Endothelial cell of umbilical vein (primary cell): ENCODE measurements at regions of chr16 and their contacts with region 1.

Region 1: GRCh38 chr16:67159593-67160406 is at the starts of genes FBXL8 and TRADD:
- DNase-seq: peak; percentile 79
- H3K4me3 ChIP-seq: peak within 1 kb of the TSS; percentile 78 to 89 (median 81)
- H3K27ac ChIP-seq: peak within 1 kb of the TSS; percentile 38
- H3K4me1 ChIP-seq: peaks cover 18% of the 10 kb centered on the region
- H3K27me3 ChIP-seq: peaks cover 19 to 21% of the 10 kb centered on the region in 2 experiments
- CTCF ChIP-seq: peak; percentile 34 to 59
- POLR2A ChIP-seq: peak; percentile 70
- total RNA-seq, gene FBXL8: 5.4 and 7.0 TPM in 2 replicates
- total RNA-seq, gene TRADD: 15.2 and 17.4 TPM in 2 replicates

Region 2: DNA sequence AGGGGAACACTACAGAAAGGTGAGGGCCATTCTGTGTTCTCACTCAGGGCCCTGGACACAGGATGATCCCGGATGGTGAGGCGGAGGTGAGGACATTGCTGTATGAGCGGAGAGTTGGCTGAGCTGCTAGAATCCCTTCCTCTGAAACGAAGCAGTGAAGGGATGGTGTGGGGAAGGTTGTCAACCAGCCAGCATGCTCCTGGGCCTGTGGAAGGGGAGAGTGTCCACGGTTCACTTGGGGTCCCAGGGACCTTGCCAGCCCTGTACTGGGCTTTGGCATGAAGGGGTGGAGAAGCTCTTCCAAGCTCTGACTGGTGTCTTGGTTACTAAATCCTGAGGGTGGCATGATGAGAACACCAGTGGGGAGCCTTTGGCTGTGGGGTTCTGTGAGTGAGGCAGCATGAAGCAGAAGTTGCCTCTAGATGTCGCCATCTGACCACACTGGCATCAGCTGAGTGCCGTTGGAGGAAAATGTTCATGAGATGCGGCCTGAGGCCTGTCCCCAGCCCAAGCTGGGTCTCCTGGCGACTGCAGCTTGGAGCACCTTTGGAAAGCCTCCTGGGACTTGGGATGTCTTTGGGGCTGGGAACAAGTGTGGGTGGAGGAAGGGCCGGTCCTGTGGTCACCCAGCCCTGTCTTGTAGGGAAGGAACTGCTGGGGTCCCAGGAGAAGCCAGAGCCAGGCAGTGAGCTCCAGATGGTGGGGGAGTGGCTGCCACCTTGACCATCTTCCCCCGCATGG is 264.7 kb before region 1 on chr16:
- CTCF ChIA-PET with region 1: interaction called, 19 read pairs
- POLR2A ChIA-PET with region 1: no interaction called
- dilution Hi-C with region 1: no loop called
- intact Hi-C with region 1: no loop called
- DNase-seq: peak; percentile 64
- H3K4me3 ChIP-seq: no peak overlapping the region
- H3K27ac ChIP-seq: no peak overlapping the region
- H3K4me1 ChIP-seq: peaks cover 5% of the 10 kb centered on the region
- H3K27me3 ChIP-seq: no peaks in the 10 kb centered on the region
- CTCF ChIP-seq: peak; percentile 74 to 89
- POLR2A ChIP-seq: no peak

Region 3: DNA sequence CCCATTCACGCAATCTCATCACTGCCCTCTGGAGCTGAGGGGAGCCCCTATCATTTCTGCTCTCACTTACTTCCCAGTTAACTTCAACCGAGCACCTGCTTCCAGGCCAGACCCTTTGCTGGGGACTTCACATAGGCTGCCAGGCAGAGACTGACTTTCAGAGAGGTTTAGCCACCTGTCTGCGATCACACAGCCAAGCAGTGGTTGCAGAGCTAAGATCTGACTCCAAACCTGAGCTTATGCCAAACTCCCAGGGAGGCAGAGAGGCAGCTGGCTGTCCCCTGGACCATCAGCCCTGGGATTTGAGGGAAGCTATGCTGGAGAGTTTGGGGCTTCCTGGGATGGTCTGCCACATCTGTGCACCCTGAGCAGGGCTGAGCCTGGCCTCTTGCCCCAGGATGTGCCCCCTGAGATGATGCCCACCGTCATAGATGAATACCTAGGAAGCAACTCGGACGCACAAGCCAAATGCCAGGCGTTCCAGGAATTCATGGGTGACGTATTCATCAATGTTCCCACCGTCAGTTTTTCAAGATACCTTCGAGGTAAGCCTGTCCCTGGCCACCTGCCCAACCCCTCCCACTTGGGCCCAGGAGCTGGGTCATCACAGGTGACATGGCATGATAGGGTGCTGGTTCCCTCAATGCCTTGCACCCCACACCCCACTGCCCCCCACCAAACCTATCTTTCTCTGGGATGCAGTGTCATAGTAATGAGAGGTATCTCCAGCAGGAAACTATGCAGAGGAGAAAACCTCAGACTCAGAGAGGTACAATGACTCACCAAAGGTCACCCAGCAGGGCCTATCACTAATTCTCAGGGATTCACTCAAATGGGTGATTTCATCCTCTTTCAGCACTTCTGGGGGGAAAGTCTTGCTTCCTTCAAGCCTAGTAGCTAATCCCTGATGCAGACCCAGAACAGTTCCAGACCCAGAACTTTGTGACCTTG is 188.8 kb before region 1 on chr16:
- CTCF ChIA-PET with region 1: interaction called, 58 read pairs
- POLR2A ChIA-PET with region 1: no interaction called
- dilution Hi-C with region 1: no loop called
- intact Hi-C with region 1: no loop called
- DNase-seq: no peak
- H3K4me3 ChIP-seq: no peak overlapping the region
- H3K27ac ChIP-seq: no peak overlapping the region
- H3K4me1 ChIP-seq: no peaks in the 10 kb centered on the region
- H3K27me3 ChIP-seq: peaks cover 2 to 3% of the 10 kb centered on the region in 2 experiments
- CTCF ChIP-seq: no peak
- POLR2A ChIP-seq: no peak

Region 4: DNA sequence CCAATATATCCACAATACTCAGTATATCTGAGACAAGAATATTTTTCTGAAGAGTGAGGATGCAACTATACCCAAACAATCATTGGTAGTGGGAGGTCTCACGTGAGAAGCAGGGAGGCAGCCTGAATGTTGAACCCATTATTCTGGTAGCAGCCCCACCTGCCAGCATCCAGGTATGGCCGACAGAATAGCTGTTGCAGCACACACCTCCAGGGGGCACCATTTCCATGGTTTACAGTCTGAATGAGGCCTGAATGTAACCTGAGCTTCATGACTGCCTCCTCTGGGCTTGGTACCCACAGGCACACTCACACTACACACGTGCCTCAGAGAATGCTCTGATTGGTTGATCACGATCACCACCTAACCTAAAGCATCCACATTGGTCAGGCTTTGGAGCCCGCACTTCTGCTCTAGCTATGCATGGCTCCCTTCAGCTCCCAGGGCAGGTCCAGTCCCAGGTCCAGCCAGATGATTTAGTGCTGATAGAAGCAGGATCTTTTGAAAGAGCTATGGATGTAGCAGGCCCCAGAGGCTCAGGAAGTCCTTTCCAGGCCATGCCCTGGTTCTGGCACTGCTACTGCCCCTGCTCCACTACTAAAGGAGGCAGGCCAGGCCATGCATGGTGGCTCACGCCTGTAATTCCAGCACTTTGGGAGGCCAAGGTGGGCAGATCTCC is 141.9 kb before region 1 on chr16:
- CTCF ChIA-PET with region 1: interaction called, 302 read pairs
- POLR2A ChIA-PET with region 1: interaction called, 12 read pairs
- dilution Hi-C with region 1: no loop called
- intact Hi-C with region 1: loop called (anchors 1 kb)
- DNase-seq: peak; percentile 89
- H3K4me3 ChIP-seq: no peak overlapping the region
- H3K27ac ChIP-seq: no peak overlapping the region
- H3K4me1 ChIP-seq: peaks cover 9% of the 10 kb centered on the region
- H3K27me3 ChIP-seq: no peaks in the 10 kb centered on the region
- CTCF ChIP-seq: peak; percentile 76 to 81
- POLR2A ChIP-seq: no peak

Region 5: DNA sequence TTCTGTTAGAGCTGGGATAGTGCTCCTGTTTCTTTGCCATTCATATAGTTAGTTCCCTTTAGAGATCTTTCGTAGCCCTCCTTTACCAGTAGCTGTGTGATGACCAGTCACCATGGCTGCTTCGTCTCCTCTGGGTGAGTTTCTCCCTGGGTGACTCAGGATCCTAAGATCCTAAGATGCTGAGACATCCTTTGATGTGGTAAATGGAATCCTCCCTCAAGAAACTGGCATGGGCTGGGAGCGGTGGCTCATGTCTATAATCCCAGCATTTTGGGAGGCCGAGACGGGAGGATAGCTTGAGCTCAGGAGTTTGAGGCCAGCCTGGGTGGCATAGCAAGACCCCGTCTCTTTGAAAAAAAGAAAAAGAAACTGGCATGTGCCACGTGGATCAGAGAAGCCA is 44.2 kb before region 1 on chr16:
- CTCF ChIA-PET with region 1: interaction called, 20 read pairs
- POLR2A ChIA-PET with region 1: no interaction called
- dilution Hi-C with region 1: no loop called
- intact Hi-C with region 1: no loop called
- DNase-seq: no peak
- H3K4me3 ChIP-seq: no peak overlapping the region
- H3K27ac ChIP-seq: no peak overlapping the region
- H3K4me1 ChIP-seq: peaks cover 1% of the 10 kb centered on the region
- H3K27me3 ChIP-seq: no peaks in the 10 kb centered on the region
- CTCF ChIP-seq: no peak
- POLR2A ChIP-seq: no peak

Region 6: GRCh38 chr16:67144943-67145342 is 14.9 kb before region 1 on chr16:
- CTCF ChIA-PET with region 1: interaction called, 67 read pairs
- POLR2A ChIA-PET with region 1: no interaction called
- dilution Hi-C with region 1: no loop called
- intact Hi-C with region 1: no loop called
- DNase-seq: no peak
- H3K4me3 ChIP-seq: no peak overlapping the region
- H3K27ac ChIP-seq: no peak overlapping the region
- H3K4me1 ChIP-seq: no peaks in the 10 kb centered on the region
- H3K27me3 ChIP-seq: peaks cover 0 to 2% of the 10 kb centered on the region in 2 experiments
- CTCF ChIP-seq: no peak
- POLR2A ChIP-seq: no peak

Region 7: GRCh38 chr16:67279296-67280089 is 119.7 kb after region 1 on chr16 and contains the start of gene PLEKHG4:
- CTCF ChIA-PET with region 1: no interaction called
- POLR2A ChIA-PET with region 1: no interaction called
- dilution Hi-C with region 1: no loop called
- intact Hi-C with region 1: no loop called
- DNase-seq: peak; percentile 71
- H3K4me3 ChIP-seq: peak within 1 kb of the TSS; percentile 16 to 60 (median 51)
- H3K27ac ChIP-seq: peak within 1 kb of the TSS; percentile 78
- H3K4me1 ChIP-seq: peaks cover 21% of the 10 kb centered on the region
- H3K27me3 ChIP-seq: no peaks in the 10 kb centered on the region
- CTCF ChIP-seq: peak; percentile 73
- POLR2A ChIP-seq: no peak
- total RNA-seq, gene PLEKHG4: 23.9 and 26.6 TPM in 2 replicates

Region 8: DNA sequence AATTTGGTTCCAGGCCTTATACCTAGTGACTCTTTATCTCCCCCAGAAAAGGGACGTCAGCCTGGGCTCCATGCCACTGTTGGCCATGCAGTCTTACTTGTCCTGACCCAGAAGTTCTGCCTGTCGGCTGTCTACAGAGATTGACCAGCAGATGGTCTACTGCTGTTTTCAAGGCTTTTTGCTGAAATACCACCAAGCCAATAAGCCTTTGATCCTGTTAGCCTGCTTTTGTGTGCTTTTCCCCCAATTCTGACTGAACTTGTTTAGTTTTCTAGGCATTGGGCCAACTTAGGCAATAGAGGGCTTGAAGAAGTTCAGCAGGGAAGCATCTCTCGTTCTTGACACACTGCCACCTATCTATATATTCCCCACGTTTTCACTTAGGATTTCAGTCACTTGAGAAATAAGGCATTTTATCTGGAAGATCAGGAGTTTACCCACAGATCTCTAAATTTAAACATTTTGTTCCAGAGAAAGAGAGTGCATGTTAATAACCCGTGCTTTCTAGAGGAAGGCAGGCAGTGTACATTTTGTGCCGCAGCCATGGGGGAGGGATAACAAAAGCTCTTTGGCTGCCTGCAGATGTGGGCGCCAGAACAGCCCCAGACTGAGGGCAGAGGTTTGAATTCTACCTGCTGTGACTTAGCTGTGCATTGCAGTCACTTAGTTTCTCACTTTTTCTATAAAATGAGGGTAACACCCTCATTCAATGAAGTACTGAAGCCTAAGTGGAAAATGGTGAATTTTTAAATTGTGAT is 472.8 kb after region 1 on chr16:
- CTCF ChIA-PET with region 1: no interaction called
- POLR2A ChIA-PET with region 1: no interaction called
- dilution Hi-C with region 1: no loop called
- intact Hi-C with region 1: no loop called
- DNase-seq: no peak
- H3K4me3 ChIP-seq: no peak overlapping the region
- H3K27ac ChIP-seq: no peak overlapping the region
- H3K4me1 ChIP-seq: no peaks in the 10 kb centered on the region
- H3K27me3 ChIP-seq: no peaks in the 10 kb centered on the region
- CTCF ChIP-seq: no peak
- POLR2A ChIP-seq: no peak